ENCODE measurements at regions of chr5 and their contacts with region 1.

Region 1: GRCh38 chr5:9431496-9432258 is 114.2 kb downstream of the SEMA5A start:
- DNase-seq: no peak

Region 2: GRCh38 chr5:9297134-9297533 is 134.5 kb before region 1 on chr5:
- intact Hi-C with region 1: no loop called
- DNase-seq: no peak

Region 3: DNA sequence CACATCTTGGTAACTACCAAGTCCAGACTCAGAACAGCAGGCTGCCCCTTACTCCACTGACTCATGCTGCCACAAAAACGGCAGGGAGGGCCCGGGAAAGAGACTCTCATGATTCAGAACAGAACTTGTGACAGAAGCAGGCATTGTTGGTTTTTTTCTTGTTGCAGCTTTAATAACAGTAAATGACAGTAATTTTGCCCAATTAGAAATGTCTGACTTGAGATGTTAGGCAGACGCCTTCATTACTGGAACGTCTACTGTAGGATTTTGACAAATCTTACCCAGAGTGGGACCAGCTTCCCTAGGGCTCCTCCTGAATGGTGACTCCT is 36.3 kb after region 1 on chr5:
- intact Hi-C with region 1: no loop called
- DNase-seq: no peak

Region 4: DNA sequence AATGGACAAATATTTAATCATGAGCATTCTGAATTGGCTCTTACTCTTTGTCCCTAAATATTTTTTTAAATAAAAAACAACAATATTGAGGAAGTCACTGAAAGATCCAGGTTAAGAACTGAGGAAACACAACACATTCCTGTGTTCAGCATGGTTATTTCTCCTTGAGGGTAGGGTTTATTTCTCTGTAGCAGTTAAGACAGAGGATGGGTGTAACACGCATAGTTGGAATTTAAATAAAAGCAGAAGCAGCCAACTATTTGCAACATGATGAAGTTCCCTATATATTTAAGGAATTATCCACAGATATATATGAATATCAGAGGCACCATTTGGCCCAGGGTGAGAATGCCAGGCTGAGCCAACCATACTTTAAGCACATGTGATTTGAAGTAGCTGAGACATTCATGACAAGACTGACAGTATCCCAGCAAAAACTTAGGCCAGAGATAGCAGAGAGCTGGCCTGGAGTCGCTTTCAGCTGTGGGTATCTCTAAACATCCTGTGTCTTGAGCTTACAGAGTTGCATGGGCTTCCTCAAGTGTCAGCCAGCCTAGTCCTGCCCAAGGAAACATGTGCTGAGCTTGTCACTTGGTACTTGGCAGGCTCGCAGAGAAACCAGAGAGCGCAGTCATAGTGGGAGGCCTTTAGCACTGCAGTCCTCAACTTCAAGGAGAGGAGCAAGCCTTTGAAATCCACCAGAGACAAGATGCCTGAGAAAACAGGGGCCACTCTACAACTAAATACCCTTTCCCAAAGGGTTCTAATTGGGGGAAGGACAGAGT is 70.6 kb after region 1 on chr5:
- intact Hi-C with region 1: loop called (anchors 5 kb)
- DNase-seq: no peak

Measured in cardiac septum (tissue), 1 donor.